OCI-LY7 (cell line): ENCODE measurements at regions of chr16 and their contacts with region 1.

Region 1: GRCh38 chr16:88561485-88562369 is 8.5 kb upstream of the ZC3H18 start:
- DNase-seq: peak; percentile 62
- H3K4me3 ChIP-seq: no peak overlapping the region
- H3K27ac ChIP-seq: no peak overlapping the region
- H3K4me1 ChIP-seq: peaks cover 3% of the 10 kb centered on the region
- CTCF ChIP-seq: peak; percentile 67

Region 2: DNA sequence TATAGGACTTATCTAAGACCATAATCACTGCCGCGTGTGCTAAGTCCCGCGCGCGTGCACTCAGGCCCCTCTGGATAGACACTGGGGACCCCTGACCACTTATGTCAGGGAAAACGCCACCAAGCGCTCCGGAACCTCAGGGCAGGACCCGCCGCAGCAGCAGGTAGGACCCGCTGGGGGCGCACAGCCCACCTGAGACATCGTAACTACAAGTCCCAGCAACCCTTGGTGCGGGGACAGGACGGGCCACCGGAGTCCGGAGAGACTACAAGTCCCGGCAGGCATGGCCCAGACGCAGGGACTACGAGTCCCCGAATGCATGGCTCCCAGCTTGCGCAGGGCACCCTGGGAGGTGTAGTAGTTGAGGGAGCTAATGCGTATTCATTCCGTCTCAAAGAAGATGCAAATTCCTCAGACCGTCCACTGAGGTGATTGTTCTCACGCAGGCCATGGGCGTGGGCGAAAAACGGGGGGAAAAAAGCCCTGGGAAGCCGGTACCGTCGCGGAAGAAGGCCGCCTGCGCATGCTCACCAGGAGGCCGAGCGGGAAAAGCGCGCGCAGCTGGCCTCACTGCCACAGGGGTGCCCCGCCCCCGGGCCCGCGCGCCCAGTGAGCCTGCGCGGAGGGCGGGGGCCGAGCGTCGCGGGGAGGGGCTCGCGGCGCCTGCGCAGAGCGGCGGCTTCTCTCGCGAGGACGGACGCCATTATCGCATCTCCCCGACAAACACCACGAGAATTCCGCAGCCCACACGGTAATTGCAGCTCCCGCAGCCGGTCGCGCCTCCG is 610.8 kb before region 1 on chr16 and contains the start of gene BANP:
- CTCF ChIA-PET with region 1: no interaction called
- POLR2A ChIA-PET with region 1: no interaction called
- intact Hi-C with region 1: loop called (anchors 10 kb)
- DNase-seq: peak; percentile 100
- H3K4me3 ChIP-seq: peak within 1 kb of the TSS; percentile 74
- H3K27ac ChIP-seq: peak within 1 kb of the TSS; percentile 76
- H3K4me1 ChIP-seq: peaks cover 53% of the 10 kb centered on the region
- CTCF ChIP-seq: peak; percentile 65
- total RNA-seq, gene BANP: 37.1 and 39.6 TPM in 2 replicates

Region 3: GRCh38 chr16:88415713-88416323 is 145.9 kb before region 1 on chr16:
- CTCF ChIA-PET with region 1: no interaction called
- POLR2A ChIA-PET with region 1: no interaction called
- intact Hi-C with region 1: no loop called
- DNase-seq: no peak
- H3K4me3 ChIP-seq: no peak overlapping the region
- H3K27ac ChIP-seq: no peak overlapping the region
- H3K4me1 ChIP-seq: no peaks in the 10 kb centered on the region
- CTCF ChIP-seq: no peak

Region 4: GRCh38 chr16:88442727-88443576 is 118.8 kb before region 1 on chr16:
- CTCF ChIA-PET with region 1: no interaction called
- POLR2A ChIA-PET with region 1: no interaction called
- intact Hi-C with region 1: loop called (anchors 1 kb)
- DNase-seq: peak; percentile 76
- H3K4me3 ChIP-seq: no peak overlapping the region
- H3K27ac ChIP-seq: no peak overlapping the region
- H3K4me1 ChIP-seq: no peaks in the 10 kb centered on the region
- CTCF ChIP-seq: peak; percentile 88

Region 5: GRCh38 chr16:88461331-88462269 is 100.1 kb before region 1 on chr16:
- CTCF ChIA-PET with region 1: no interaction called
- POLR2A ChIA-PET with region 1: no interaction called
- intact Hi-C with region 1: no loop called
- DNase-seq: no peak
- H3K4me3 ChIP-seq: no peak overlapping the region
- H3K27ac ChIP-seq: no peak overlapping the region
- H3K4me1 ChIP-seq: peaks cover 17% of the 10 kb centered on the region
- CTCF ChIP-seq: no peak

Region 6: DNA sequence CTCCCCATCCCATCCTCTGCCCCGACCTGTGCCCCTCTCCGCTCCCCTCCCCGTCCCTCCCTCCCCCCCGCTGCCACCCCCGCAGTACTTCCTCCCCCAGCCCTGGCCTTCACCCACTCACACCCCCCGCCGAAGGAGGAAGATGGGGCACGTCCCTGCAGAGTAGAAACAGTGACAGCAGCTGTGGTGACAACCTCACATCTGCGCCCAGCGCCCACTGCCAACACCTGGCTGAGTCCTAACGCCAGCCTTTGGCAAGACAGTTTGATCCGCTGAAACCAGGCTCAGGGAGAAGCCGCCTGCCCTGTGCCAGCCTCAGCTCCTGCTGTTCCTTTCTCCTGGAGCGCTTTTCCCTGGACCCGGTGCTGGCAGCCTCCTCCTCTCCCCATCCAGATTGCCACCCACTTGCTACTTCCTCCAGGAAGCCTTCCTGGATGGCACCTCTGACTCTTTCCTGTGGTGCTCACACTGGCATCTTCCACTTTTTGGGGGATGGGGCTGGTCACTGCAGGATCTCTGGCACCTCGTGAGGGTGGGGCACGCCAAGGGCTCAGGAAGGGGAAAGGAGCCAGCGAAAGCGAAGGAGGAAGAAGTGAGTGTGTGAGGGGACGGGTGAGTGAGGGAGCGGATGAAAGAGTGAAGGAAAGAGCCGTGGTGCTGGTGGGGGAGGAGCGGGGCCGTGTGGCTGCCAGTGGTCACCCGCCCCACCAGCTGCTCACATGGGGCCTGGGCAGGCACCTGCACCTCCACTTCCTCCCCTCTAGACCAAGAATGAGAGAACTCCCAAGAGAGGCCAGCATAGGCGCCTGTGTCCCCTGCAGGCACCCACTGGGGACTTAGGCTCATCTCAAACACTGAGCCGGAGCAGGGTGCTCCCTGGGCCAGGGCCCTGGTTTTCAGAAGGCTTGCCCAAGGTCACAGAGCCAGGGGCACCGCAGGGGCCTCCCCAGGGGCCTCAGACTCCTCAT is 81.7 kb before region 1 on chr16:
- CTCF ChIA-PET with region 1: no interaction called
- POLR2A ChIA-PET with region 1: no interaction called
- intact Hi-C with region 1: loop called (anchors 1 kb)
- DNase-seq: peak; percentile 78
- H3K4me3 ChIP-seq: peak overlapping the region; percentile 36
- H3K27ac ChIP-seq: peak overlapping the region; percentile 47
- H3K4me1 ChIP-seq: peaks cover 54% of the 10 kb centered on the region
- CTCF ChIP-seq: no peak

Region 7: GRCh38 chr16:88533932-88534732 is 27.6 kb before region 1 on chr16:
- CTCF ChIA-PET with region 1: no interaction called
- POLR2A ChIA-PET with region 1: no interaction called
- intact Hi-C with region 1: loop called (anchors 2 kb)
- DNase-seq: peak; percentile 87
- H3K4me3 ChIP-seq: peak overlapping the region; percentile 92
- H3K27ac ChIP-seq: peak overlapping the region; percentile 51
- H3K4me1 ChIP-seq: peaks cover 14% of the 10 kb centered on the region
- CTCF ChIP-seq: no peak